Panc1 (cell line): ENCODE measurements at regions of chr10 and their contacts with region 1.

Region 1: DNA sequence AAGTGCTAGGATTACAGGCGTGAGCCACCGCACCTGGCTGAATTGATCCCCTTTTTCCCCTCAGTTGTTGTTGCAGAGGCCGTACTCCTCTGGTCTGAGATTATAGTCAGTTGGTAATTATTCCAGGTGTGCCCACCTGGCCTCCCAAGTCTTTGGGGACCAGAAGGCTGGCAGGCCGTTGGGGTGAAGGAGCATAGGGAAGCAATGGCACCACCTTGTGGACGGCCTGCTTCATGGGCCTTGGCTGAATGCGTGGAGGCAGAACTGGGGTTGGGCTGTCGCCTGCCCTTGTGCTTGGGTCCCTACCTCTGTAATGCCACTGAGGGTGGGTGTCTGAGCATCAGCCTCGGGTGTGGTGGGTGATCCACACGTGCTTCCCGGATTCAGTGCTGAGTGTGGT is 125.7 kb downstream of the RGS10 start:
- DNase-seq: peak; percentile 32
- ATAC-seq: peak; percentile 86
- H3K4me3 ChIP-seq: no peak overlapping the region
- H3K27ac ChIP-seq: no peak overlapping the region
- H3K4me1 ChIP-seq: 0 out of 2 replicates have a peak, but pooled peaks cover 3% of the 10 kb centered on the region
- H3K27me3 ChIP-seq: no peaks in the 10 kb centered on the region
- CTCF ChIP-seq: peak; percentile 94

Region 2: DNA sequence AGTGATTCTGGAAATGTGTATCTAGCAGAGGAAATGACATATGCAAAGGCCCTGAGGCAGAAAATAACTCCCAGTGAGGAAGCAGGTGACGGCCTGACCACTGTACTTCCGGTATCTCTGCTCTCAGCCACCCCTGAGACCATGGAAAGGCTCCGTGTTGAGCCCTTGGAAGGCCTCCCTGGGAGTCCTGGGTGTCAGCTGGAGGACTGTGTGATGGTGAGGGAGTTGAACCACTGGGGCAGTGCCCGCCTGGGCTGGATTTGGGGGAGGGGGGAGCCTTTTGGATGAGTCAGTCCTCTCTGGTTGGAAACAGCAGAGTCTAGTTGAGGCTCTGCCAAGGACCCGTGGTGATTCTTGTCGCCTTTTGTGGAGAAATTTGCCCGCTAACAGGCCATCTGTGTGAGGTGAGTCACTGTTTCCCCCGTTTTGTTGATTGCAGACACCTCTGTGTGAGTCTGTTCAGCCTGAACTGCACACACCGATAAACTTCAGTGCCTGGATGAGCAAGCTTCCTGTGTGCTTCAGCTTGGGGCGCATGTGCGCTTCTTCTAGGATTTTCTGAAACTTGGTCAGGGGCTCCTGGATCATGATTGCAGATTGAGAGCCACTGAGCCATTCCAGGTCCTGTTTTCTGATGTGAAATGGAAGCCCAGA is 110.9 kb before region 1 on chr10:
- CTCF ChIA-PET with region 1: interaction called, 4 read pairs
- POLR2A ChIA-PET with region 1: no interaction called
- in situ Hi-C with region 1: no loop called
- intact Hi-C with region 1: loop called (anchors 10 kb)
- DNase-seq: peak; percentile 96
- ATAC-seq: peak; percentile 88
- H3K4me3 ChIP-seq: peak overlapping the region in 1 of 2 experiments; percentile 35; a peak in 2 of 4 replicates
- H3K27ac ChIP-seq: peak overlapping the region; percentile 74
- H3K4me1 ChIP-seq: peaks cover 90% of the 10 kb centered on the region
- H3K27me3 ChIP-seq: no peaks in the 10 kb centered on the region
- CTCF ChIP-seq: no peak

Region 3: DNA sequence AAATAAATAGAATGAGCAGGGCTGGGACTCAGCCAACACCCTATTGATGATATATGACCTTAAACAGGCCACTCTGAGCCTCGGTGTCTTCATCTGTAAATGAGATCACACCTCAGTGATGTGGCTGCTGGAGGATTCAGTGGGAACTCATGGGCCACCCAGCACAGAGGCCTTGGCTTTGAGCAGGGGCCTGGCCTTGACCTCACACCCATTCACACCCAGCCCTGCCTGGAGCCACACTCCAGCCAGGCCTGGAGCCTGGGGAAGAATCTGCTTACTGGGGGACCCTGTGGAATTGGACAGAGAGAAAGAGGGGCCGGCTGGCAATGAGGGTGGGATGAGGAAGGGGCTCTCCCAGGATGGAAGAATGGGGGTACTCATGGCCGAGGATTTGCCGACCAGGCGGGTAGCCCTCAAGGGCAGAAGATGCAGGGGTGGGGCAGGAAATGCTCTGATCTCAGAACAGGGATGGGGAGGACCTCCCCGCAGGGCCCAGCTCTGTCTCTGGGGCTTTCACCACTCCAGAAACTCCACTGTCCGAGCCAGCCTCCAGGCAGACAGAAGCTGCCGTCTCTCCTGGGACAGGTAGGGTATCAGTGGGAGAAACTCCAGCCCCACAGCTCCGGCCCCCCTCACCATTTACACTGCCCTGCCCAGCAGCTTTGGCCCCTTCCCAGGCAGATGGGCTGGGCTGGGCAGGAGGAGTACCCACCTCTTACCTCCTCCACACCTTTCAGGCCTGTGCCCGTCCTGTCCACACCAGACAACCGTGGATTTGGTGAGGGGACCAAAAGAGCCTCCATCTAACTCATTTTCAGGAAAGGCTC is 43.7 kb after region 1 on chr10:
- CTCF ChIA-PET with region 1: no interaction called
- POLR2A ChIA-PET with region 1: interaction called, 11 read pairs
- in situ Hi-C with region 1: no loop called
- intact Hi-C with region 1: no loop called
- DNase-seq: no peak
- ATAC-seq: 0 out of 2 replicates have a peak, but pooled peaks have one; percentile 30
- H3K4me3 ChIP-seq: no peak overlapping the region
- H3K27ac ChIP-seq: no peak overlapping the region
- H3K4me1 ChIP-seq: peaks cover 4% of the 10 kb centered on the region; the same call in 1 of the 2 replicates
- H3K27me3 ChIP-seq: no peaks in the 10 kb centered on the region
- CTCF ChIP-seq: no peak

Region 4: DNA sequence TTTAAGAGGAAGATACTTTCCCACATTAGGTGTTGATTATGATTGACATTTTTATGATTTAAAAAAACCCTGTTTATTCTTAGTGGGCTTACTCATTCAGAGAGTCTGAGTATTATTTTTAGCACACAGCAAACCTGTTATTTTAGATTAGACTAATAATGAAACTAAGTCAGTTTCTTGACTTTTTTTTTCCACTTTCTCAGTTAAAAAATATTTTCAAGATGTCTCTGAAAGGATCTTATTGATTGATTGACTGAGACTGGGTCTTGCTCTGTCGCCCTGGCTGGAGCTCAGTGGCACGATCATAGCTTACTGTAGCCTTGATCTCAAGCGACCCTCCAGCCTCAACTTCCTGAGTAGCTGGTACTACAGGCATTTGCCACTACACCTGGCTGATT is 288.6 kb after region 1 on chr10:
- CTCF ChIA-PET with region 1: no interaction called
- POLR2A ChIA-PET with region 1: no interaction called
- in situ Hi-C with region 1: no loop called
- intact Hi-C with region 1: no loop called
- DNase-seq: no peak
- ATAC-seq: no peak
- H3K4me3 ChIP-seq: no peak overlapping the region
- H3K27ac ChIP-seq: no peak overlapping the region
- H3K4me1 ChIP-seq: 0 out of 2 replicates have a peak, but pooled peaks cover 3% of the 10 kb centered on the region
- H3K27me3 ChIP-seq: no peaks in the 10 kb centered on the region
- CTCF ChIP-seq: no peak